Right ventricle myocardium inferior (tissue), 1 donor: ENCODE measurements at regions of chr7 and their contacts with region 1.

Region 1: DNA sequence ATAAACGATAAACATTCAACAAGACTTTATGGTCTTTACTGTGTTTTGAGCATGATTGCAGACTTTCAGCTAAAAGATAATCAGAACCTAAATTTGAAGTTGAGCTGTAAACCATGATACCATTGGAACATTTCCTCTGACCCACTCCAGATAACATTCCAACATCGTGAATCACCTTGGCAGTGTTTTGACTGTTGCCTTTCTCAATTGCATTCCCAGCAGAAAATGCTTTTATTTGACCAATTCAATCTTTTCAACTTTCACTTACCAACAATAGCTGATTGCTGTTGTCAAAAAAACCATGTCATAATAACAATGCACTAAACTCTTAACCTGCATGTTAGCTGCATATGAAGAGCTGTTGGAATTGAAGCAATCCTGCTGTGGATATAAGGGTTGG is 165.5 kb downstream of the MDFIC start:
- DNase-seq: no peak
- ATAC-seq: peak; percentile 76

Region 2: GRCh38 chr7:114988755-114989375 is 98.6 kb before region 1 on chr7:
- intact Hi-C with region 1: no loop called
- DNase-seq: peak; percentile 56
- ATAC-seq: peak; percentile 71

Region 3: DNA sequence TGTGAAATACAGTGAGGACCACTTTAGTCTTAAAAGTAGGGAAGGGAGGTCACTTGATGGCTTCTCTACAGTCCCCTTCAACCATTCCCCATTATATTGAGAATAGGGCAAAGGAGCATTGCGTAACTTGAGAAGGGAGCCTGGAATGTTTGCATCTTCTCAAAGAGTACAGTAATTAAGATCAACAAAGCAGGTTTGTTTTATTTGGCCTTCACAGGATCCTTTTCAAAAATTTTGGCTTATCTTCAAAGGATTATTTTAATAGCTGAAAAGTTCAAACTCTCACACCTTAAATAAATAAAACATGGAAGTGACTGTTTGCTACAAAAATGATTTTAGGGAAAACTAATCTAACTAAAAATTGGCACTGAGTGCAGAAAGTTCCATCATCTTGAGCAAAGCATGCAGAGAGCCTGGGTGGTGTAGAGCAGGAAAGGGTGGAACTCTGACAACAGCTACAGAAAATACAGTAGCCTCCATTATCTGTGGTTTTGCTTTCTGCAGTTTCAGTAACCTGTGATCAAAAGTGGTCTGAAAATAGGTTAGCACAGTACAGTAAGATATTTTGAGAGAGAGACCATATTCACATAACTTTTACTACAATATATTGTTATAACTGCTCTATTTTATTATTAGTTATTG is 48.5 kb after region 1 on chr7:
- intact Hi-C with region 1: loop called (anchors 2 kb)
- DNase-seq: no peak
- ATAC-seq: no peak

Region 4: GRCh38 chr7:115230882-115231571 is 143.6 kb after region 1 on chr7:
- intact Hi-C with region 1: no loop called
- DNase-seq: no peak
- ATAC-seq: no peak